ENCODE measurements at regions of chr9 and their contacts with region 1.

Region 1: GRCh38 chr9:90914868-90915483 is 113.4 kb downstream of the SYK start:
- DNase-seq: peak; percentile 87
- H3K4me3 ChIP-seq: peak overlapping the region in 1 of 2 experiments; percentile 37; a peak in 1 of 4 replicates
- H3K27ac ChIP-seq: no peak overlapping the region
- H3K4me1 ChIP-seq: no peaks in the 10 kb centered on the region; a peak in 1 of 4 replicates
- H3K27me3 ChIP-seq: no peaks in the 10 kb centered on the region
- CTCF ChIP-seq: peak; percentile 95
- EP300 ChIP-seq: no peak
- RAD21 ChIP-seq: peak; percentile 94

Region 2: DNA sequence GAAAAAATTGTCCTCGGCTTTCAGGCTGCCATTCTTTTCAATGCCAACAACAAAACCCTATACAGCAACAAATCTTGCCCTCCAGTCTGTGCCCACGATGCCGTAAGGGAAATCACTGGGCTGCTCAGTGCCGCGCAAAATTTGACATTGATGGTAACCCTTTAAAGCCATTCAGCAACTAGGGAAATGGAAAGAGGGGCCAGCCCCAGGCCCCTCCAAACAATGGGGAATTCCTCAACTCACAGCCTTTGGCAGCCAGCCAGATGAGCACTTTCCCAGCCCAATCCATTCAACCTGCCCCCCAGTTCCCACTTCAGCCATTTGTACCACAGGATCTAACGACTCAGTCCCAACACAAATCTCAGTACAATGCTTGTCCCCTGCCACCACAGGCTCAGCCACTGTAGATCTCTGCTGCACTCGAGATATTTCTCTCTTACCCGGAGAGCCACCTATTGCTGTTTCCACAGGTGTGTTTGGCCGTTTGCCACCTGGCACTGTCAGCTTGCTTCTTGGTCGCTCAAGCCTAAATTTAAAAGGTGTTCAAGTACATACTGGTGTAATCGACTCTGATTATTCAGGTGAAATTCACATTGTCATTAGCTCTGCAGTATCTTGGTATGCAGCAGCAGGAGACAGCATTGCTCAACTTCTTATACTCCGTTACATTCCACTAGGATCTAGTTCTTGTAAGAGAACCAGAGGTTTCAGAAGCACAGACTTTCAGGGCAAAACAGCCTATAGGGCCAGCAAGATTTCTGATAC is 10.1 kb before region 1 on chr9:
- CTCF ChIA-PET with region 1: interaction called, 44 read pairs
- POLR2A ChIA-PET with region 1: no interaction called
- DNase-seq: no peak
- H3K4me3 ChIP-seq: no peak overlapping the region
- H3K27ac ChIP-seq: no peak overlapping the region
- H3K4me1 ChIP-seq: no peaks in the 10 kb centered on the region
- H3K27me3 ChIP-seq: no peaks in the 10 kb centered on the region
- CTCF ChIP-seq: no peak
- EP300 ChIP-seq: no peak
- RAD21 ChIP-seq: no peak

Region 3: DNA sequence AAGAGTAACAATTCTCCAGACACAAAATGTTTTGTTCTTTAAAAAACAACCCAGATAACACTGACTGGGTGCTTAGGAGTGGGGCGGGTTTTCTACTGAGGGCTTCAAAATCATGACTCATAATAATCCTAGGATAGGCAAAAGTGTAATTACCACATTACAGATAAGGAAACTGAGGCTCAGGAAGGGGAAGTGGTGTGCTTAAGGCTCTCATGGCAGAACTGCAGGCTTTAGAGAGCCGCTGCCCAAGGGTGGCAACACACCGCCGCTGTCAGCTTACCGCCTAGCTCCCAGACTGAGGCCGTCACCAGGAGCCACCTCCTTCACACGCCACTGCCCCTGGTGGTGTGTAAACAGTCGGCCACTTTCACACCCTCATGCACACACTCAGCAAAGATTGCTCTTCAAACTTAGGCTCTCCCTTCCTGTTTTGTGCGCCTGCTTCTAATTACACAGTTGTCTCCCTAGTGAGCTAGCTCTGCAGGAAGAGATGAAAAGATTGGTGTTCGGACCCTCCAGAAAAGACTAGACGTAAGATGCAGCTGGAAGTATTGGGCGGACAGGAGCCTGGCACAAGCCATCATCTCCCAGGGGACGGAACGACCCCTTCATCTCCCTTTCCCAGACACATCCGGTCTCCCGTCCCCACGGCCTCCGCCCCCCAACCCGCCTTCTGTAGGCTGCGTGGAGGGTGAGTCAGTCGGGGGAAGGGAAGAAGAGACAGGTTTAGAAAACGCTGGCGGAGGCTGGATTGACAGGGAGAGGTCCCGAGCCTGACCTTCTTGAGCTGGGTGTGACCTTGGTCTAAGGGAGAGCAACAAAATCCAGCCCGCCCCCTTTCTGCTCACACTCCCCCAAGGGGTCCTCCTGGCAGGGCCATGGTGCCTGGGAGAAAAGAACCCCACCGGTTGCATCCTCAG is 49.4 kb after region 1 on chr9:
- CTCF ChIA-PET with region 1: interaction called, 11 read pairs
- POLR2A ChIA-PET with region 1: no interaction called
- DNase-seq: peak; percentile 51
- H3K4me3 ChIP-seq: no peak overlapping the region
- H3K27ac ChIP-seq: no peak overlapping the region; a peak in 1 of 4 replicates
- H3K4me1 ChIP-seq: peaks cover 0 to 19% of the 10 kb centered on the region in 2 experiments; a peak in 1 of 4 replicates
- H3K27me3 ChIP-seq: no peaks in the 10 kb centered on the region
- CTCF ChIP-seq: no peak
- EP300 ChIP-seq: no peak
- RAD21 ChIP-seq: no peak

Region 4: GRCh38 chr9:91036826-91037510 is 122.0 kb after region 1 on chr9:
- CTCF ChIA-PET with region 1: interaction called, 25 read pairs
- POLR2A ChIA-PET with region 1: no interaction called
- DNase-seq: peak; percentile 88
- H3K4me3 ChIP-seq: peak overlapping the region in 1 of 2 experiments; percentile 19; a peak in 1 of 4 replicates
- H3K27ac ChIP-seq: peak overlapping the region; percentile 54 to 60
- H3K4me1 ChIP-seq: peaks cover 14% of the 10 kb centered on the region in 2 experiments; a peak in 3 of 4 replicates
- H3K27me3 ChIP-seq: no peaks in the 10 kb centered on the region
- CTCF ChIP-seq: peak; percentile 79
- EP300 ChIP-seq: no peak
- RAD21 ChIP-seq: peak; percentile 89

Region 5: DNA sequence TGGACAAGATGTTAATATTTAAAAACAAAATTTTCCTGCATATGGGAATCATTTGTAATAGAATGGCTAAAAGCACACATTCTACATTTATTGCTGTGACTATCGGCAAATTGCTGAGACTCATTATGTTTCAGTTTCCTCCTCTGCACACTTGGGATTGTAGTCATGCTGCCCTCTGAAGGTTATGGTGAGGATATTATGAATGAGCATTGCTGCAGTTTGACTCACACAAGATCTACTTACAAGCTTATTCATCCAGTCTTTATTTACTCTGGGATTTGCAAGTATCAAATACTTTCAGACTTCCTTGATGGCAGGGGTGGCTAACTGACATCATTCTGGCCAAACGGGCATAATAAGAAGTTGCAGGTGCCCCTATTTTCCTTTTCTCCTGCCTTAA is 518.2 kb after region 1 on chr9:
- CTCF ChIA-PET with region 1: interaction called, 21 read pairs
- POLR2A ChIA-PET with region 1: no interaction called
- DNase-seq: peak; percentile 30
- H3K4me3 ChIP-seq: no peak overlapping the region
- H3K27ac ChIP-seq: peak overlapping the region in 1 of 2 experiments; percentile 35; a peak in 1 of 4 replicates
- H3K4me1 ChIP-seq: no peaks in the 10 kb centered on the region
- H3K27me3 ChIP-seq: no peaks in the 10 kb centered on the region
- CTCF ChIP-seq: peak; percentile 63
- EP300 ChIP-seq: no peak; a peak in 1 of 4 replicates
- RAD21 ChIP-seq: peak; percentile 67

Region 6: DNA sequence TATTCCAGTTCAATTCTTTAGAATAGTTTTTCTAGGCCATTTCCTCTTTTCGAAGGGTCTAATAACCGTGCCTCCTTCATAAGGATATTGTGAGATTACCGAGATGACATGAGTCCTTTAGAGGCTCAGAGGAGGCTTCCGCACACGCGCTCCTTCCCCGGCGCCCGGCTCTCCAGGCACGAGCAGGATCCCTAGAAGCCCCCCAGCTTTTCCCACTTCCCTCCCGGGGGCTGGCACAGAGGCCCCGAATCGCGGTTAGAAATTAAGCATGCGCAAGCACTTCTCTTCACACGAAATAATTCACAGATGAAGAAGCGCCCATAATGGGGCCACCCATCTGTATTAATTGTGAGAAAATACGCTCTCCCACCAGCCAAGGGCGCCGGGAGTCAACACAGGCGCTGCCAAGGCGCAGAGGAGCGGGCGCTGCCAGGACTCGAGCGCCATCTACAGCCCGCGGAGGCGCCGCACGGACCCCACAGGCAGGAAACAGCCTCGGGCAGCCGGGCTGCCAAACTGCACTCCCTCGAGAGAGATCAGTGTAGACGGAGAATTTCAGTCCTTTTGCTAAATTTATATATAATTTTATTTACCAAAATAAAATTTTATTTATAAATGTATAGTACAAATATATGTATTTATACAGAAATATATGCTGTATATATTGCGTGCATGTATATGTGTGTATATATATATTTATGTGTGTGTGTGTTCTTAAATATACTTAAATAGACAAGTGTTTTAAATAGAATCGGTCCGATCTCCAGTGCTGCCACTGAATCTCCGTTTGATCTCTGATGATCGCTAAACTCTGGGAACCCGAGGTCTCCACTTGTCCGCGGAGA is 766.7 kb after region 1 on chr9:
- CTCF ChIA-PET with region 1: interaction called, 24 read pairs
- POLR2A ChIA-PET with region 1: no interaction called
- DNase-seq: peak; percentile 92
- H3K4me3 ChIP-seq: peak overlapping the region in 1 of 2 experiments; percentile 47; a peak in 2 of 4 replicates
- H3K27ac ChIP-seq: no peak overlapping the region
- H3K4me1 ChIP-seq: peaks cover 0 to 2% of the 10 kb centered on the region in 2 experiments; a peak in 1 of 4 replicates
- H3K27me3 ChIP-seq: no peaks in the 10 kb centered on the region
- CTCF ChIP-seq: peak; percentile 89
- EP300 ChIP-seq: no peak
- RAD21 ChIP-seq: peak; percentile 86

Region 7: DNA sequence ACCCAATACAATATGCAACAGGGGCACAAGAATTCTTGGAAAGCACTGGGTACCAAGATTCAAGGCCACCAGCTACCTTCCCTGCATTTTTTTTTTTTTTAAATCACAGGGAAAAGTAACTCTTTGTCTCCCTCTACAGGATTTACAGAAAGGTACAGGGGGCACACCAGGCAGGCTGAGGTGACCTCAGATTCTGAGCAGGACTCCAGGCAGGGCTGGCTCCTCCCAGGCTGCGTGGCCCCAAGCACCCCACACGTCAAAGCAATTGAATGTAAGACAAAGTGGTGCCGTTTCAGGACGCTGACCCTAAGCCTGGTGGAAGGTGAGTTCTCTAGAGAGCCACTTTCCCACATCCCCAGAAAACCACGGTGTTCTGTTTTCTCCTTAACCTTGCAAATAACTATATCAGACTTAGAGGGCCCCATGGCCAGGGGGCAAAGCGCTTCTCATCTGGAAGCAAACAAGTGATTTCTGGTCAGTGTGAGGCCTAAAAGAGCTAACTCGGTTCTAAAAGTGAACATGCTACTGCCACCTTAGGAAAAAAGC is 812.4 kb after region 1 on chr9:
- CTCF ChIA-PET with region 1: interaction called, 47 read pairs
- POLR2A ChIA-PET with region 1: no interaction called
- DNase-seq: peak; percentile 88
- H3K4me3 ChIP-seq: no peak overlapping the region; a peak in 1 of 4 replicates
- H3K27ac ChIP-seq: no peak overlapping the region
- H3K4me1 ChIP-seq: peaks cover 0 to 6% of the 10 kb centered on the region in 2 experiments; a peak in 1 of 4 replicates
- H3K27me3 ChIP-seq: no peaks in the 10 kb centered on the region; the same call in 1 of the 2 replicates
- CTCF ChIP-seq: peak; percentile 80
- EP300 ChIP-seq: no peak
- RAD21 ChIP-seq: peak; percentile 82

Measured in SK-N-SH (cell line).